Calu3 (cell line): ENCODE measurements at regions of chr14 and their contacts with region 1.

Region 1: GRCh38 chr14:68788996-68789820 is 3.7 kb downstream of the ZFP36L1 start:
- DNase-seq: peak; percentile 91
- H3K4me3 Mint-ChIP-seq: peak overlapping the region; percentile 85
- H3K27ac Mint-ChIP-seq: peak overlapping the region; percentile 81
- H3K4me1 Mint-ChIP-seq: peaks cover 27% of the 10 kb centered on the region
- H3K27me3 Mint-ChIP-seq: no peaks in the 10 kb centered on the region
- CTCF ChIP-seq: peak; percentile 49

Region 2: DNA sequence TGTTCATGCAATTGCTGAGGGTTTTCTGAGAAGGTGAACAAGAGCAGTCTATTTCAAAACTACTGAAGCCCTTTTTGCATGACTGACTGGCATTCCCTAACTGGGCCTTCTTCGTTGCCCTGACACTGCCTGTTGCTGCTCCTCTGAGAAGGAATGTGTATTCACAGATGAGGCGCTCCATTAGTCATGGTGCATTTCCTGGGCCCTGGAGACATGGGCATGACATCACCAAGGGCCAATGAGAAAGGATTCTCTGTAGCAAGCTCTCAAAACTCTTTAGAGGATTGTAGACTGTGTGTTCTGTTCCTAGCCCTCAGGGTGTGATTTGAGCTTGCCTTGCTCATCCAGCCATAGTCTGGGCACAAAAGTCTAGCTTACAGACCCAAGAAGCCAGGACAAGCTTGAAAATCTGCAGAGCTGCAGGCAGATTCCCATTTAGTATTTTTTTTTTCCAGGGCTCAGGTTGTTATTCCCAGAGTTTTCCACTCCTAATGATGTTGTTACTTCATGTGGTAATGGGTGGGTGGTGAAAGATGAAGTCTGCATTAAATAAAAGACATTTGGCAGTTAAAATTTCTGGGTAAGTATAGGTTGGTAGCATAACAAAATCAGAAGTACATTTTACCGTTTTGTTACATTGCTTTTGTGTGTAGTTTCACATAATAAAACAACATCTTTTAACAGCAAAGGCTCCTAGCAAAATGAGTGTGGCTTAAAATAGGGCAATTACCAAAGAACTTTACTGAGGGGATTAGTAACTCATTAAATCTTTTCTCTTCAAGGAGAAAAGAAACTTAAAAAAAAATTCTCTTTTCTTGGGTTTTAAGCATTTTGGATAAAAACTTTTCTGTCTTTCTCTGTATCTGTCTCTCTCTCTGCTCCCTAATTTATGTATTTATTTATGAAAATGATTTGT is 651.2 kb before region 1 on chr14:
- CTCF ChIA-PET with region 1: no interaction called
- intact Hi-C with region 1: loop called (anchors 10 kb)
- DNase-seq: peak; percentile 79
- H3K4me3 Mint-ChIP-seq: no peak overlapping the region
- H3K27ac Mint-ChIP-seq: peak overlapping the region; percentile 89
- H3K4me1 Mint-ChIP-seq: peaks cover 38% of the 10 kb centered on the region
- H3K27me3 Mint-ChIP-seq: no peaks in the 10 kb centered on the region
- CTCF ChIP-seq: no peak

Region 3: GRCh38 chr14:68377459-68377858 is 411.7 kb before region 1 on chr14:
- CTCF ChIA-PET with region 1: interaction called, 5 read pairs
- intact Hi-C with region 1: loop called (anchors 10 kb)
- DNase-seq: peak; percentile 44
- H3K4me3 Mint-ChIP-seq: no peak overlapping the region
- H3K27ac Mint-ChIP-seq: peak overlapping the region; percentile 68
- H3K4me1 Mint-ChIP-seq: peaks cover 26% of the 10 kb centered on the region
- H3K27me3 Mint-ChIP-seq: no peaks in the 10 kb centered on the region
- CTCF ChIP-seq: no peak

Region 4: DNA sequence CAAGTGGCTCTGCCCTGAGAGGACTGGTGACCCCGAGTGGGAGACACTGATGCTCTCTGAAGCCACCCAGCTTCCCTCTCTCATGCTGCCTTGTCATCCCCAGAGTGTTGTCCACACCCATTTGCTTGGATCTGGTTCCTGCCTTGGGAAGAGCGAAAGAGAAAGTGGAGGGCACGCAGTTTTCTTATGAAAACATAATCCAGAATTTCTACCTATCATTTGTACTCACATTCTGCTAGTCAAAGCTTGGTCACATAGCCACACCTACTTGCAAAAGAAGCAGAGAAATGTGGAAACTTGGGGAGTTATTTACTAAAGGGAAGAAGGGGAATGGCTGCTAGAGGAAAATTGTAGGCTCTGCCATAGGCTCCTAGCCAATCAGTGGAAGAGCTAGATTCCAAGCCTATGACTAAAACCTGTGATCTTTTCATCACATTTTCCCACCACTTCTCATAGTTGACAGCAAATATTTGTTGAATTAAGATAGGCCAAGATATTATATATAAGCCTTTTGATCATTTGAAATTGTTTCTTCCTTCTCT is 322.6 kb before region 1 on chr14:
- CTCF ChIA-PET with region 1: interaction called, 3 read pairs
- intact Hi-C with region 1: loop called (anchors 2 kb)
- DNase-seq: peak; percentile 33
- H3K4me3 Mint-ChIP-seq: no peak overlapping the region
- H3K27ac Mint-ChIP-seq: no peak overlapping the region
- H3K4me1 Mint-ChIP-seq: peaks cover 48% of the 10 kb centered on the region
- H3K27me3 Mint-ChIP-seq: no peaks in the 10 kb centered on the region
- CTCF ChIP-seq: no peak

Region 5: GRCh38 chr14:68577827-68578541 is 211.2 kb before region 1 on chr14:
- CTCF ChIA-PET with region 1: no interaction called
- intact Hi-C with region 1: loop called (anchors 5 kb)
- DNase-seq: peak; percentile 75
- H3K4me3 Mint-ChIP-seq: no peak overlapping the region
- H3K27ac Mint-ChIP-seq: peak overlapping the region; percentile 98
- H3K4me1 Mint-ChIP-seq: peaks cover 45% of the 10 kb centered on the region
- H3K27me3 Mint-ChIP-seq: no peaks in the 10 kb centered on the region
- CTCF ChIP-seq: no peak

Region 6: GRCh38 chr14:68718023-68718995 is 70.9 kb before region 1 on chr14:
- CTCF ChIA-PET with region 1: no interaction called
- intact Hi-C with region 1: no loop called
- DNase-seq: peak; percentile 28
- H3K4me3 Mint-ChIP-seq: no peak overlapping the region
- H3K27ac Mint-ChIP-seq: no peak overlapping the region
- H3K4me1 Mint-ChIP-seq: no peaks in the 10 kb centered on the region
- H3K27me3 Mint-ChIP-seq: no peaks in the 10 kb centered on the region
- CTCF ChIP-seq: peak; percentile 38

Region 7: GRCh38 chr14:68734231-68734775 is 54.9 kb before region 1 on chr14:
- CTCF ChIA-PET with region 1: no interaction called
- intact Hi-C with region 1: no loop called
- DNase-seq: no peak
- H3K4me3 Mint-ChIP-seq: no peak overlapping the region
- H3K27ac Mint-ChIP-seq: no peak overlapping the region
- H3K4me1 Mint-ChIP-seq: no peaks in the 10 kb centered on the region
- H3K27me3 Mint-ChIP-seq: peaks cover 9% of the 10 kb centered on the region
- CTCF ChIP-seq: no peak

Region 8: GRCh38 chr14:68816262-68816942 is 27.2 kb after region 1 on chr14:
- CTCF ChIA-PET with region 1: interaction called, 20 read pairs
- intact Hi-C with region 1: loop called (anchors 2 kb)
- DNase-seq: peak; percentile 90
- H3K4me3 Mint-ChIP-seq: peak overlapping the region; percentile 59
- H3K27ac Mint-ChIP-seq: peak overlapping the region; percentile 87
- H3K4me1 Mint-ChIP-seq: peaks cover 24% of the 10 kb centered on the region
- H3K27me3 Mint-ChIP-seq: no peaks in the 10 kb centered on the region
- CTCF ChIP-seq: peak; percentile 92